T-cell (primary cell): ENCODE measurements at regions of chrX and their contacts with region 1.

Region 1: GRCh38 chrX:97563531-97564133 is 679.9 kb downstream of the RPA4 start:
- DNase-seq: peak; percentile 5 to 64 (median 21)
- ATAC-seq: peak; percentile 84 to 99 (median 96)
- H3K4me3 ChIP-seq: peak overlapping the region in 1 of 2 donors; percentile 25
- H3K4me3 Mint-ChIP-seq: peak overlapping the region; percentile 72 to 88 (median 82)
- H3K27ac ChIP-seq: peak overlapping the region; percentile 59
- H3K27ac Mint-ChIP-seq: peak overlapping the region; percentile 93 to 94
- H3K4me1 ChIP-seq: peaks cover 0 to 7% of the 10 kb centered on the region in 2 experiments
- H3K4me1 Mint-ChIP-seq: peaks cover 22 to 29% (median 25%) of the 10 kb centered on the region in 3 donors
- H3K27me3 ChIP-seq: no peaks in the 10 kb centered on the region
- H3K27me3 Mint-ChIP-seq: no peaks in the 10 kb centered on the region

Region 2: GRCh38 chrX:96820935-96821334 is 742.7 kb before region 1 on chrX:
- CTCF ChIA-PET with region 1: no interaction called
- POLR2A ChIA-PET with region 1: interaction called in 1 of 2 experiments, 11 read pairs
- DNase-seq: no peak
- ATAC-seq: no peak
- H3K4me3 ChIP-seq: no peak overlapping the region
- H3K4me3 Mint-ChIP-seq: no peak overlapping the region
- H3K27ac ChIP-seq: no peak overlapping the region
- H3K27ac Mint-ChIP-seq: no peak overlapping the region
- H3K4me1 ChIP-seq: no peaks in the 10 kb centered on the region
- H3K4me1 Mint-ChIP-seq: no peaks in the 10 kb centered on the region
- H3K27me3 ChIP-seq: no peaks in the 10 kb centered on the region
- H3K27me3 Mint-ChIP-seq: peaks cover 0 to 2% of the 10 kb centered on the region in 2 donors